HEK293 (cell line): ENCODE measurements at regions of chr6 and their contacts with region 1.

Region 1: GRCh38 chr6:31197559-31198305 is 27.2 kb upstream of the POU5F1 start:
- H3K4me3 ChIP-seq: peak overlapping the region; percentile 71
- H3K27ac ChIP-seq: peak overlapping the region; percentile 60
- H3K4me1 ChIP-seq: no peaks in the 10 kb centered on the region; the same call in 1 of the 2 replicates
- CTCF ChIP-seq: no peak

Region 2: DNA sequence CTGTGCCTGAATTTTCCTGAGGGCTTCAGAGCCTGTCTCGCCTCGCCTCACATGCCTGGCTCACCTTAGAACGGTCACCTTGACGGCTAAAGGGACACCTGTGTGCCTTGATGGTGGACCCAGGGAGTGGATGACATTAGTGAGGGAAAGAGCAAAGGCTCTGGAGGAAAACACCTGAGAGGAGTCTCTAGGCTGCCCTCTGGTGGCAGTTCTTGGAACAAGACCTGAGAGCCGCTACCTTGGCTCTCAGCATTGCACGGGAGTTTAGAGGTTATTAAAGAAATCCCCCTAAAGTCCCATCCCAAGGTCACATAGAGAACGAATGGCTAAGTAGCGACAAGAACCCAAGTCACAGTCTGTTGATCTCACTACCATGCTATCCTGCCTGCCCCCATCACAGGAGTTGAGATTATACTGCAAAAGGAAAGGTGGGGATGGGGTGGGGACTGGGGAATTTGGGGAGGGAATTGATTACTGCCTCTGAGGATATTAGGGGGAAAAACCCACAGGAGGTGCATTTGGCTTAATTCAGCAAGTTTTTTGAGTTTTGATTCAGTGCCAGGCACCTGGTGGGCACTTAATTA is 69.5 kb before region 1 on chr6:
- CTCF ChIA-PET with region 1: interaction called, 100 read pairs
- POLR2A ChIA-PET with region 1: no interaction called
- H3K4me3 ChIP-seq: no peak overlapping the region
- H3K27ac ChIP-seq: no peak overlapping the region
- H3K4me1 ChIP-seq: 0 out of 2 replicates have a peak, but pooled peaks cover 3% of the 10 kb centered on the region
- CTCF ChIP-seq: peak; percentile 57; the same call in 1 of the 2 replicates

Region 3: DNA sequence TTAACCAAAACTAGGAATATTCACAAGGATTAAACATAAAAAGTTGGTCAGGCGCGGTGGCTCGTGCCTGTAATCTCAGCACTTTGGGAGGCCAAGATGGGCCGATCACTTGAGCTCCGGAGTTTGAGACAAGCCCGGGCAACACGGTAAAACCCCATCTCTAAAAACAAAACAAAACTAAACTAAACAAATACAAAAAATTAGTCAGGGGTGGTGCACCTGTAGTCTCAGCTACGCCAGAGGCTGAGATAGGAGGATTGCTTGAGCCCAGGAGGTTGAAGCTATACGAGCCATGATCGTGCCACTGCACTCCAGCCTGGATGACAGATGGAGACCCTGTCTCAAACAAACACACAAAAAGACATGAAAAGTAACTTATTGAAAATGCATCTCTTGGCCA is 62.0 kb before region 1 on chr6:
- CTCF ChIA-PET with region 1: interaction called, 100 read pairs
- POLR2A ChIA-PET with region 1: no interaction called
- H3K4me3 ChIP-seq: no peak overlapping the region
- H3K27ac ChIP-seq: no peak overlapping the region
- H3K4me1 ChIP-seq: no peaks in the 10 kb centered on the region
- CTCF ChIP-seq: no peak

Region 4: DNA sequence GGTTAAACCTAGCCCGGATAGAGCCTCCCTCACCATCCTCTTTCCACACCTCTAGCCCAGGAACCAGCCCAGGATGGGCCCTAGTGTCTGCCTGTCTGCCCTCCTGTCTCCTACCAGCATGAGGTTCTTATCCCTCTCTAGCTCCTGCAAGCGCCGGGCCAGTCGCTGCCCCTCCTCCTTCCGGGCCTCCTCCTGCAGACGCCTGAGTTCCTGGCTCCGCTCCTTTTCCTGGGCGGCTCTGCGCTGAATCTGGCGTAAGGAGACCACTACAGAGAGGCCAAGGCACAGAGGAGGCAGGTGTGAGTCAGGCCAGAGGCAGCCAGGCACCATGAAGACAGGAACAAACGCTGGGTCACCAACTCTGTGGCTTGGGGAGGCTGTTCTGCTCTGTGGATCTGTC is 54.6 kb before region 1 on chr6:
- CTCF ChIA-PET with region 1: interaction called, 28 read pairs
- POLR2A ChIA-PET with region 1: interaction called, 3 read pairs
- H3K4me3 ChIP-seq: no peak overlapping the region
- H3K27ac ChIP-seq: no peak overlapping the region
- H3K4me1 ChIP-seq: no peaks in the 10 kb centered on the region
- CTCF ChIP-seq: no peak

Region 5: DNA sequence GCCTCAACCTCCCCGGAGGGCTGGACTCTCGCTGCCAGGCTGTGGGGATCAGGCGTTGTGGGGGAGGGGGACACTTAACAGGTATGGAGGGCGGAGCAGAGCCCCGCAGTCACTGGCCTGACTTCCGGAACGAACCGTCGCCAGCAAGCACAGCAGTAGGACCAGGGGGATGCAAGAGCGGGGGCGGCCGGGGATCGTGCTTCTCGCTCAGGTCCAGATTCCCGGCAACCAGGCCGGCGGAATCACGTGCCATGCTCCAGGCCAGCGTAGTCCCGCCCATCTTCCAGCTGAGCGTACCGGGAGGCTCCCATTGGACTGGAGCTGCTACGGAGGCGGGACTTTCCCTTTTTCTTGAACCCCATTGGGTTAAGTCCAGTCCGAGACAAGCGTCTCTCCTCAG is 17.2 kb before region 1 on chr6:
- CTCF ChIA-PET with region 1: interaction called, 10 read pairs
- POLR2A ChIA-PET with region 1: no interaction called
- H3K4me3 ChIP-seq: no peak overlapping the region
- H3K27ac ChIP-seq: no peak overlapping the region
- H3K4me1 ChIP-seq: no peaks in the 10 kb centered on the region
- CTCF ChIP-seq: no peak

Region 6: DNA sequence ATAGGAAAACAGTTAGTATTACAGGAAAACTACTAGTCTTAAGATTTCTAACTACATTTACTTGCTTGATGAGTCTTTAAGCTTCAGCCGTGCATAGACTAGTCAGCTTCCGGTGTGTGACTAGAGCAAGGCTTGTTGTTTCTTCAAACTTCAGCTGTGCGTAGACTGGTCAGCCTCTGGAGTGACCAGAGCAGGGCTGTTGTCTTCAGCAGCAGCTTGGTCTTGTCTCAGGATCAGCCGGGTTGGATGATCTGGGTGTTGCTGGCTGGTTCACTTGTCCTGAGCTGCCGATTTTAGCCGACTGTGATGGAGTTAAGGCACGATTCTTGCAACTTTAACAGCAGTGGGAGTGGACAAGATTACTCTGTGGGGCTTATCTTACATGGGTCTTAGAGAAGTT is 29.4 kb after region 1 on chr6:
- CTCF ChIA-PET with region 1: interaction called, 11 read pairs
- POLR2A ChIA-PET with region 1: no interaction called
- H3K4me3 ChIP-seq: no peak overlapping the region
- H3K27ac ChIP-seq: no peak overlapping the region
- H3K4me1 ChIP-seq: no peaks in the 10 kb centered on the region
- CTCF ChIP-seq: no peak

Region 7: GRCh38 chr6:31383149-31383548 is 185.4 kb after region 1 on chr6:
- CTCF ChIA-PET with region 1: interaction called, 29 read pairs
- POLR2A ChIA-PET with region 1: no interaction called
- H3K4me3 ChIP-seq: no peak overlapping the region
- H3K27ac ChIP-seq: no peak overlapping the region
- H3K4me1 ChIP-seq: no peaks in the 10 kb centered on the region
- CTCF ChIP-seq: no peak